ENCODE measurements at regions of chr7 and their contacts with region 1.

Region 1: DNA sequence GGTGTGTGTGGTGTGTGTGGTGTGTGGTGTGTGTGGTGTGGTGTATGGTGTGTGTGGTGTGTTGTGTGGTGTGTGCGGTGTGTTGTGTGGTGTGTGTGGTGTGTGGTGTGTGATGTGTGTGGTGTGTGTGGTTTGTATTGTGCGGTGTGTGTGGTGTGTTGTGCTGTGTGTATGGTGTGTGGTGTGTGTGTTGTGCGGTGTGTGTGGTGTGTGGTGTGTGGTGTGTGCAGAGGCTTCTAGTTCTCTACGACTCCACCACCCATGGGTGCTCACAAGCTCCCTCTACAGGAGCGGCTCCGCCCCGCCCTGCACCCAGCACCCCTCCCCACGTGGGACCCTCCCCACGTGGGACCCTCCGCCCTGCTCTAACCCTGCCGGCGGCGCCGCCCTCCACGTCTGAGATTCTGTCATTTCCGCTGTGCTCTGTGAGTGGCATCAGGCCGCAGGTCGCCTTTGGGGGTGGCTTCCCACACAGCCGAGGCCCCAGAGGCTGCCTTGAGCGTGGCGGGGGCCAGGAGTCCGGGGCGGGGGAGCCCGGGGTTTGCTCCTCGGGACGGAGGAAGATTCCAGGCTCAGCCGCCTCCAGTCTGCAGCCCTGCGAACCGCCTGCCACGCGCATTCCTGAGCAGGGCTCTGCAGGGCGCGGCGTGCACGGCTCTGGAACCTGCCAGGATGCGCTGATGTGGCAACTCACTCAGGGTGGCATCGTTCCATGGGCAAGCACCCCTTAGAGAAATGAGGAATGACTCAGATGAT is 37.0 kb upstream of the DNAJB6 start:
- DNase-seq: peak; percentile 46
- ATAC-seq: peak; percentile 10
- H3K4me3 Mint-ChIP-seq: no peak overlapping the region
- H3K27ac Mint-ChIP-seq: peak overlapping the region; percentile 79
- H3K4me1 Mint-ChIP-seq: peaks cover 33% of the 10 kb centered on the region
- H3K27me3 Mint-ChIP-seq: peaks cover 5% of the 10 kb centered on the region
- CTCF ChIP-seq: no peak

Region 2: DNA sequence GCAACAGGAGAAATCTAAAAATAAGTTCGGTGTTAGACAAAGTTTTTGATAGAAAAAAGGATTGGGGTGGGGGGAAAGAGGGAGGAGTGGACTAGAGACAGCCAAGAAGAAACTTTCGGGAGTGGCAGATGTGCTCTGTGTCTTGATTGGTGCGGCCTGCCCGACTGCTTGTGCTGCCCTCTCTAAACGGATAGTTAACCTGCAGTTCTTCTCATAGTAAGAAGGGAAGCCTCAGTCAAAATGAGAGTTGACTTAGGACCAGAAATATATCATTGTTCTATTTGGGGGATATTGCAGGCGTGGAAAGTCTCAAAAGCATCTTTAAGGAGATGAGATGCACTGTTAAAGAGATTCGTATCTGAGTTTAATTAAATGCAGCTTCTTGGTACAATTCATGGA is 121.8 kb before region 1 on chr7:
- CTCF ChIA-PET with region 1: no interaction called
- POLR2A ChIA-PET with region 1: no interaction called
- intact Hi-C with region 1: no loop called
- DNase-seq: no peak
- ATAC-seq: no peak
- H3K4me3 Mint-ChIP-seq: no peak overlapping the region
- H3K27ac Mint-ChIP-seq: no peak overlapping the region
- H3K4me1 Mint-ChIP-seq: no peaks in the 10 kb centered on the region
- H3K27me3 Mint-ChIP-seq: no peaks in the 10 kb centered on the region
- CTCF ChIP-seq: no peak

Region 3: GRCh38 chr7:157336383-157337315 is 36.9 kb after region 1 on chr7 and contains the start of gene DNAJB6:
- CTCF ChIA-PET with region 1: interaction called, 21 read pairs
- POLR2A ChIA-PET with region 1: interaction called, 22 read pairs
- intact Hi-C with region 1: loop called (anchors 5 kb)
- DNase-seq: peak; percentile 94
- ATAC-seq: peak; percentile 79
- H3K4me3 Mint-ChIP-seq: peak within 1 kb of the TSS; percentile 87
- H3K27ac Mint-ChIP-seq: peak within 1 kb of the TSS; percentile 95
- H3K4me1 Mint-ChIP-seq: peaks cover 33% of the 10 kb centered on the region
- H3K27me3 Mint-ChIP-seq: peaks cover 5% of the 10 kb centered on the region
- CTCF ChIP-seq: no peak
- total RNA-seq, gene DNAJB6: 67.8 to 80.6 TPM

Measured in activated CD8-positive, alpha-beta T cell treated with anti-CD3 and anti-CD28 coated beads for 36 hours (primary cell).